ENCODE measurements at regions of chr18 and their contacts with region 1.

Region 1: GRCh38 chr18:68623342-68623741 is 91.6 kb downstream of the TMX3 start:
- DNase-seq: peak; percentile 84
- ATAC-seq: peak; percentile 90
- H3K4me3 ChIP-seq: no peak overlapping the region
- H3K27ac ChIP-seq: no peak overlapping the region
- H3K4me1 ChIP-seq: no peaks in the 10 kb centered on the region
- H3K27me3 ChIP-seq: no peaks in the 10 kb centered on the region
- CTCF ChIP-seq: peak; percentile 89
- POLR2A ChIP-seq: peak; percentile 50; the same call in 1 of the 2 replicates
- RAD21 ChIP-seq: peak; percentile 96

Region 2: DNA sequence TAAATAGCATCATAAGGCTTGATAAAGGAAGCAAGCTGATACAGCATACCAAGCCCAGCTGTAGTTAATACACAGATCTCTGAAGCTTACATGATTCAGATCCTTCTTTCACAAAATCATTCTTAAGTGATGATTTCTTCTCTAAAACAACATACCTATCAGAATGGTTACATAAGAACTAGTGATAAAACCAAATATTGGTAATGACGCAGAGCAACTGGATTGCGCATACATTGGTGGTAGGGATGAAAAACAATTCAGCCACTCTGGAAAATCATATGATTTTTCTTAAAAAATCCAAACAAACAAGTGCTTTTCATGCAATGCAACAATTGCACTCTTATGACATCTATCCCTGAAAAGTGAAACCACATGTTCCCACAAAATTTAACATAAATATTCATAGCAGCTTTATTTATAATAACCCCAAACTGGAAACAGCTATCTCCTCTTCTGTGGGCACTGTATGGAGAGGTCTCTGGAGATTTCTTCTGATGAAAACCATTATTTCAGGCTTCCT is 953.3 kb before region 1 on chr18:
- CTCF ChIA-PET with region 1: no interaction called
- POLR2A ChIA-PET with region 1: no interaction called
- dilution Hi-C with region 1: no loop called
- in situ Hi-C with region 1: no loop called
- intact Hi-C with region 1: loop called (anchors 2 kb)
- DNase-seq: peak; percentile 98
- ATAC-seq: peak; percentile 87
- H3K4me3 ChIP-seq: no peak overlapping the region
- H3K27ac ChIP-seq: peak overlapping the region; percentile 100
- H3K4me1 ChIP-seq: peaks cover 12% of the 10 kb centered on the region
- H3K27me3 ChIP-seq: no peaks in the 10 kb centered on the region
- CTCF ChIP-seq: no peak
- POLR2A ChIP-seq: no peak
- RAD21 ChIP-seq: 0 out of 2 replicates have a peak, but pooled peaks have one; percentile 2

Region 3: GRCh38 chr18:67864677-67865340 is 758.5 kb before region 1 on chr18:
- CTCF ChIA-PET with region 1: no interaction called
- POLR2A ChIA-PET with region 1: no interaction called
- dilution Hi-C with region 1: no loop called
- in situ Hi-C with region 1: no loop called
- intact Hi-C with region 1: loop called (anchors 1 kb)
- DNase-seq: peak; percentile 58
- ATAC-seq: peak; percentile 41
- H3K4me3 ChIP-seq: no peak overlapping the region
- H3K27ac ChIP-seq: no peak overlapping the region
- H3K4me1 ChIP-seq: peaks cover 2% of the 10 kb centered on the region; the same call in 1 of the 2 replicates
- H3K27me3 ChIP-seq: no peaks in the 10 kb centered on the region
- CTCF ChIP-seq: no peak
- POLR2A ChIP-seq: no peak
- RAD21 ChIP-seq: no peak

Region 4: GRCh38 chr18:67938660-67939059 is 684.7 kb before region 1 on chr18:
- CTCF ChIA-PET with region 1: no interaction called
- POLR2A ChIA-PET with region 1: no interaction called
- dilution Hi-C with region 1: no loop called
- in situ Hi-C with region 1: no loop called
- intact Hi-C with region 1: loop called (anchors 10 kb)
- DNase-seq: peak; percentile 84
- ATAC-seq: peak; percentile 97
- H3K4me3 ChIP-seq: no peak overlapping the region
- H3K27ac ChIP-seq: peak overlapping the region; percentile 99; the same call in 1 of the 2 replicates
- H3K4me1 ChIP-seq: peaks cover 2% of the 10 kb centered on the region; the same call in 1 of the 2 replicates
- H3K27me3 ChIP-seq: no peaks in the 10 kb centered on the region
- CTCF ChIP-seq: no peak
- POLR2A ChIP-seq: no peak
- RAD21 ChIP-seq: no peak

Region 5: GRCh38 chr18:68177807-68178702 is 445.3 kb before region 1 on chr18:
- CTCF ChIA-PET with region 1: no interaction called
- POLR2A ChIA-PET with region 1: no interaction called
- dilution Hi-C with region 1: no loop called
- in situ Hi-C with region 1: no loop called
- intact Hi-C with region 1: loop called (anchors 1 kb)
- DNase-seq: peak; percentile 99
- ATAC-seq: peak; percentile 96
- H3K4me3 ChIP-seq: no peak overlapping the region
- H3K27ac ChIP-seq: peak overlapping the region; percentile 91; the same call in 1 of the 2 replicates
- H3K4me1 ChIP-seq: peaks cover 6% of the 10 kb centered on the region; the same call in 1 of the 2 replicates
- H3K27me3 ChIP-seq: no peaks in the 10 kb centered on the region
- CTCF ChIP-seq: no peak
- POLR2A ChIP-seq: no peak
- RAD21 ChIP-seq: peak; percentile 9; the same call in 1 of the 2 replicates

Region 6: DNA sequence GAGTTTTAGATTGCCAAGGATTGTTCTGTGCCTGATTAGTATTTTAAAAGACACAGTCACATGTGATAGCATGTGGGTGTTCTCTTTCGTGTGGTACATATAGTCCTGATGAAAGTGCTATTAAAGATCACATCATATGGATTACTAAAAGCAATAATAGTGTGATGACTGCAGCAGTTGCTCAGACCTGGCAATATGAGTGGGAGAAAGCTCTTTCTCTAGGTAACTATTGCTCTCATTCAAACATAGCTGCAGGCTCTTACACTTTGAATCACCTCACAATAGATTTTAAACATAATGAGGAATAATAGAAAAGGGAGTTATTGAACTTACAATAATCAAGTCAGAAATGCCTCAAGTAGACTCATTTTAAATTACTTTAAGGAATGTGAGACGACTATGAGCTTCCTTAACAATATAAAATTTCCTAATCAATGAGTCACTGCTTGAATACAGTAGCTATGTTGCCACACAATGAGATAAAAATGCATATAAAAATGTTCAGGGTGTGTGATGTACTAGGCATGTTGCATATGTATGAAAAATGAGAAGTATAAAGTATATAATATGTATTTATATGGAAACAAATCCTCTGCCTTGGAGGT is 360.6 kb before region 1 on chr18:
- CTCF ChIA-PET with region 1: no interaction called
- POLR2A ChIA-PET with region 1: no interaction called
- dilution Hi-C with region 1: no loop called
- in situ Hi-C with region 1: no loop called
- intact Hi-C with region 1: loop called (anchors 10 kb)
- DNase-seq: peak; percentile 83
- ATAC-seq: peak; percentile 74
- H3K4me3 ChIP-seq: no peak overlapping the region
- H3K27ac ChIP-seq: no peak overlapping the region
- H3K4me1 ChIP-seq: peaks cover 6% of the 10 kb centered on the region
- H3K27me3 ChIP-seq: no peaks in the 10 kb centered on the region
- CTCF ChIP-seq: no peak
- POLR2A ChIP-seq: no peak
- RAD21 ChIP-seq: no peak

Region 7: GRCh38 chr18:68494802-68495581 is 128.3 kb before region 1 on chr18:
- CTCF ChIA-PET with region 1: no interaction called
- POLR2A ChIA-PET with region 1: no interaction called
- dilution Hi-C with region 1: no loop called
- in situ Hi-C with region 1: no loop called
- intact Hi-C with region 1: loop called (anchors 5 kb)
- DNase-seq: peak; percentile 98
- ATAC-seq: peak; percentile 96
- H3K4me3 ChIP-seq: no peak overlapping the region
- H3K27ac ChIP-seq: peak overlapping the region; percentile 96; the same call in 1 of the 2 replicates
- H3K4me1 ChIP-seq: peaks cover 7% of the 10 kb centered on the region; the same call in 1 of the 2 replicates
- H3K27me3 ChIP-seq: no peaks in the 10 kb centered on the region
- CTCF ChIP-seq: no peak
- POLR2A ChIP-seq: no peak
- RAD21 ChIP-seq: 0 out of 2 replicates have a peak, but pooled peaks have one; percentile 8

Region 8: DNA sequence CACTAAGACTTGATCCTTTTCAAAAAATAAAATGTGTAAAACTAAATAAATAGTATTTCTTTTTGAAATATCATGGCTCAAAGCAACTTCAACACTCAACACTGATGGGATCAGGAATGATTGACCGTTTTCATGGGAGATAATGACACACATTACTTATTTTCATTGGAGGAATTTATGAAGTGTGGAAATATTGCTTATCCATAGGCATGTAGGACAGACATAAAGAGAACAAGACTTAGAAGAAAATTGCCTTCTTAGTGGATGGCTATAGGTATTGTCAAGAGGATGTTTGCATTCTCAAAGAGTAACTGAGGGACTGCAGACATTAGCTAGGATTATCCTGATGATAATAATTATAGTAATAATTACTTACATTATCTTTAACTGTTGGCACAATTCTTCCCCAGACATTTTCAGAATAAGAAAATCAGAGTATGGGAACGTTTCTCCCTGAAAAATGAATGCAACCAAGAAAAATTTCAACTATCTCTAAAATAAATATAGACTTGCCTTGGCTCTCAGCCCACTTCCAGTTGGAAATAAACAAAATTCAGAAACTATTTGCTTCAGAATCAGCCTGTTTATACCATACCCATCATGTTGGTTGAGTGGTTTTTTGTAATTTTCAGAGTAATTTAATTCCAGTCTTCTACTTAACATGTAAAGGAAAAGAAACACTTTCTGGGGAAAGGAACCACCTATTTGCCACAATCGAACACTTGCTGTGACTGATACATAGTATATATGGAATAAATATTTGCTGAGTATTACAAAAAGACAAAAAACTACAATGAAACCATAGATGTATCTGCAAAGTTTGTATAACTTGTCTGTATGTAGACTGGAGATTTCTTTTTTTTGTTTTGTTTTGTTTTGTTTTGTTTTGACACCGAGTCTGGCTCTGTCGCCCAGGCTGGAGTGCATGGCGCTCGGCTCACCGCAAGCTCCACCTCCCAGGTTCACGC is 74.2 kb before region 1 on chr18:
- CTCF ChIA-PET with region 1: no interaction called
- POLR2A ChIA-PET with region 1: no interaction called
- dilution Hi-C with region 1: no loop called
- in situ Hi-C with region 1: no loop called
- intact Hi-C with region 1: no loop called
- DNase-seq: peak; percentile 81
- ATAC-seq: peak; percentile 85
- H3K4me3 ChIP-seq: no peak overlapping the region
- H3K27ac ChIP-seq: peak overlapping the region; percentile 99
- H3K4me1 ChIP-seq: peaks cover 12% of the 10 kb centered on the region
- H3K27me3 ChIP-seq: no peaks in the 10 kb centered on the region
- CTCF ChIP-seq: no peak
- POLR2A ChIP-seq: no peak
- RAD21 ChIP-seq: no peak

Measured in IMR-90 (cell line).